ENCODE measurements at regions of chr2 and their contacts with region 1.

Region 1: DNA sequence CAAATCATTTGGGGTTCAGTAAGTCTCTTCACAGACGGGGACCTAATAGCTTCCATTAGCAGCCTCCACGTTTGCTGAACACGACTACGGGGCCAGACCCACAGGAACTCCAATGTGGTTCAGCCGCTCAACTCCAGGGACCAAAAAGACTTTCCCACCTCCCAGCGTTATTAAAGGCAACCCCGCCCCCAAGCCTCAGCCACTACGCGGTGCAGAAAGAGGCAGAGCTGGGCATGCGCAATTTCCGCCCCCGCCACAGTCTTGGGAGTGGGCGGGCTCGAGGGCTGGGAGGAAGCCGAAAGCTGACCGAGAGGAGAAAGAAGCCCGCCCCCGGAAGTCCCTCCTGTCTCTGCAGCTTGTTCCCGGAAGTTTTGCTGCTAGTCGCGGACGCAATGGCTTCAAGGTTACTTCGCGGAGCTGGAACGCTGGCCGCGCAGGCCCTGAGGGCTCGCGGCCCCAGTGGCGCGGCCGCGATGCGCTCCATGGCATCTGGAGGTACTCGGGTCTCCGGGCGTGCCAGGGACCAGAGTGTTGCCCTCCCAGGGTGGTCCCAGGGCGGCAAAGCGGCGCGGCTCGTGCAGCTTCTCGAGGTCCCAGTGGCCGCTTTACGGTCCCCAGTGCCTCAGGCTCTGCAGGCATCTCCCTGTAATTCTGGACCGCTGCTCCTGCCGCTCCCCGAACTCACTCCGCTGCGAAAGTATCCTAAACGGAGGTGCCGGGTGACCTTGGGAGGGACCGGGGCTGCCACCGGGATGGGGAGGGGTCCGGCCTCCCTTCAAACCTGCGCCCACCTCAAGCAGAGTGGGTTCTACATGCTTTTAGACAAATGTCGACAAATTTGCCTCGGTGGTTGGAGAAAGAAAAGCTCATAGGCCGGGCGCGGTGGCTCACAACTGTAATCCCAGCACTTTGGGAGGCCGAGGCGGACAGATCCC is at the start of gene COX5B:
- DNase-seq: peak; percentile 98
- ATAC-seq: peak; percentile 96
- H3K4me3 ChIP-seq: peak within 1 kb of the TSS; percentile 98 to 100 (median 99)
- H3K27ac ChIP-seq: peak within 1 kb of the TSS; percentile 76
- H3K4me1 ChIP-seq: peaks cover 21% of the 10 kb centered on the region
- H3K27me3 ChIP-seq: no peaks in the 10 kb centered on the region; a peak in 1 of 5 replicates
- CTCF ChIP-seq: peak; percentile 29; the same call in 1 of the 2 replicates
- EP300 ChIP-seq: no peak; a peak in 1 of 4 replicates
- POLR2A ChIP-seq: peak; percentile 92 to 95
- RAD21 ChIP-seq: no peak; the same call in 1 of the 2 replicates
- total RNA-seq, gene COX5B: 453 and 457 TPM in 2 replicates

Region 2: GRCh38 chr2:97663965-97664635 is 18.1 kb after region 1 on chr2 and contains the start of gene ACTR1B:
- CTCF ChIA-PET with region 1: no interaction called
- POLR2A ChIA-PET with region 1: interaction called, 298 read pairs
- in situ Hi-C with region 1: no loop called
- intact Hi-C with region 1: loop called (anchors 2 kb)
- DNase-seq: peak; percentile 98
- ATAC-seq: peak; percentile 91
- H3K4me3 ChIP-seq: peak within 1 kb of the TSS; percentile 80 to 96 (median 87)
- H3K27ac ChIP-seq: peak within 1 kb of the TSS; percentile 92
- H3K4me1 ChIP-seq: peaks cover 44% of the 10 kb centered on the region
- H3K27me3 ChIP-seq: no peaks in the 10 kb centered on the region; a peak in 1 of 5 replicates
- CTCF ChIP-seq: peak; percentile 52
- EP300 ChIP-seq: peak in 1 of 2 experiments; percentile 26; a peak in 1 of 4 replicates
- POLR2A ChIP-seq: peak; percentile 81 to 91
- RAD21 ChIP-seq: peak; percentile 54; the same call in 1 of the 2 replicates
- total RNA-seq, gene ACTR1B: 59.9 and 76.7 TPM in 2 replicates

Region 3: DNA sequence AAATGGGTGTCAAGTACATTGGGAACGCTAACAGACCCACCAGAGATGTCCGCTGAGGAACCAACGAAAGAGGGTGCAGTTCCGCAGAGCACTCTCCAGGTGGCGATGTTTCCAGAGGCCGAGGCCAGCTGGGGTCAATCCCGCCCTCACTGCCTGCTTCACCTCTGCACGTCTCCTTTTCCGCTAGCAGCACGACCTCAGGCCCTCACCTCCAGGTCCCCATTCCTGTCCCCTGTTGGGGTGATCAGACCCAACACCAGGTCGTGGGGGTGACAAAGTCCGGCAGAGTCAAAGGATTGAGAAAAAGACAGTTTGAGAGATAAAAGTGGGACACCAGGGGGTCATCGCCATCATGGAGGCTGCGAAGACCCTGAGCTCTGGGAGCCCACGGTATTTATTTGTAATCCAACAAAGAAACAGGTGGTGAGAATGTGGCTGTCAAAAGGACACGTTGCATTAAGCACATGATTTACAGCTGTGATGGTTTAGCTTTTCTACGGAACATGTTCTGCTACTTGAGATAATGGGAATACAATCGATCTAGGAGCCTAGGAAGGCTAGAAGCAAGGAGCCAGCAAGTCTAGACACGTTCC is 94.7 kb after region 1 on chr2:
- CTCF ChIA-PET with region 1: no interaction called
- POLR2A ChIA-PET with region 1: no interaction called
- in situ Hi-C with region 1: no loop called
- intact Hi-C with region 1: no loop called
- DNase-seq: peak; percentile 54
- ATAC-seq: peak; percentile 71
- H3K4me3 ChIP-seq: peak overlapping the region in 1 of 3 experiments; percentile 44; a peak in 1 of 6 replicates
- H3K27ac ChIP-seq: no peak overlapping the region
- H3K4me1 ChIP-seq: peaks cover 35% of the 10 kb centered on the region
- H3K27me3 ChIP-seq: peaks cover 2 to 27% of the 10 kb centered on the region in 2 experiments; a peak in 4 of 5 replicates
- CTCF ChIP-seq: peak; percentile 95
- EP300 ChIP-seq: no peak
- POLR2A ChIP-seq: no peak
- RAD21 ChIP-seq: peak; percentile 76

Region 4: DNA sequence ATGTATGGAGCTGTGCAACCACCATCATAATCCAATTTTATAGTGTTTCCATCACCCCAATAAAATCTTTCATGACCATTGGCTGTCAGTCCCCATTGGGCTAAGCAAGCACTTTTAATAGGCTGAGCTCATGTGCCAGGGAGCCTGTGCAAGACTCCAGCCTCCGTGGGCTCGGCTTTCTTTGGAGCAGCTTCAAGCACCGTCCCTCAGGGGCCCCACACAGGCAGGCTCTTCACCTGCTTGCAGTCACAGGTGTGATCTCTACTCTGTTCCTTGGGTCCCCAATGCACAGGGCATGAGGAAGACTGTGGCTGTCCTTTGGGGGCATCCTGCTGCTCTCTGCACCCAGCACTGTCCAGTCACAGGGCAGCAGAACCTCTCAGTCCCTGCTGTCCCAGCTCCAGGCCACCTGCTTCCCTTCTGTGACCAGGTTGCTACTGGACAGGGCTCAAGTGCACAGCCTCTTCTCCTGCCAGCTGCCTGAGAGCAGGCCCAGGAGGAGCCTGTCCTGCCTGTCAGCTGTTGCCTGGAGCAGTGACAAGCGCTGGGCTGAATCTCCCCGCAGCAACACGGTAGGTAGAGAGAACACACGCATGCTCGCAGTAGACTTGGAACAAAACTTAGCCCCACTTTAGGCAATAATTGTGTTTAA is 390.5 kb after region 1 on chr2:
- CTCF ChIA-PET with region 1: no interaction called
- POLR2A ChIA-PET with region 1: no interaction called
- in situ Hi-C with region 1: no loop called
- intact Hi-C with region 1: no loop called
- DNase-seq: no peak
- ATAC-seq: no peak; the same call in none of the 3 replicates
- H3K4me3 ChIP-seq: no peak overlapping the region
- H3K27ac ChIP-seq: no peak overlapping the region
- H3K4me1 ChIP-seq: no peaks in the 10 kb centered on the region; the same call in 1 of the 2 replicates
- H3K27me3 ChIP-seq: peaks cover 0 to 8% of the 10 kb centered on the region in 2 experiments; a peak in 3 of 5 replicates
- CTCF ChIP-seq: no peak
- EP300 ChIP-seq: no peak
- POLR2A ChIP-seq: no peak
- RAD21 ChIP-seq: no peak

Region 5: DNA sequence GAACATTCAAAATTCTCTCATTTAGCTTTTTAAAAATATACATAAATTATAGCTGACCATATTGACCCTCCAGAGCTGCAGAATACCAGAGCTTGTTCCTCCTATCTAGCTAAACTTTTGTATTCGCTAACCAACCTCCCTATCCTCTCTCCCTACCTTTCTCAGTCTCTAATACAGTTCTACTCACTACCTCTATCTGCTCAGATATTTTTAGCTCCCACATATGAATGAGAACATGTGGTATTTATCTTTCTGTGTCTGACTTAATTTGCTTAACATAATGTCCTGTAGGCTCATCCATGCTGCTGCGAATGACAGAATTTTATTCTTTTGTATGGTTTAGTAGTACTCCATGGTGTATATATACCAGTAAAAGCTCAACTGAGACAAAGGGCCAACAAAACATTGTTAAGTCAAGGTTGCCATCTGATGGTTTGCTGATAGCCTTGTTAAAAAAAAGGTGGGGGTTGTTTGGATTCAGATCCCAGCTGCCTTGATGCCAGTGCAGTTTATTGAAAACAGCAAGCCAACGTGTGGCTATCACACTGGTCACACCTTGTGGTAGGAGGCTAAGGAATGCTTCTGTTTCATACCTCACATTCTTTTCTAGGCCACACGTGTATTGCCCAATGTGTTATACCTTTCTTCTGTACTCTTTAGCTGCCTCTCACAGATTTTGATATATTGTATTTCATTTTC is 542.5 kb after region 1 on chr2:
- CTCF ChIA-PET with region 1: no interaction called
- POLR2A ChIA-PET with region 1: no interaction called
- in situ Hi-C with region 1: no loop called
- intact Hi-C with region 1: no loop called
- DNase-seq: peak; percentile 13
- ATAC-seq: no peak
- H3K4me3 ChIP-seq: no peak overlapping the region
- H3K27ac ChIP-seq: no peak overlapping the region
- H3K4me1 ChIP-seq: no peaks in the 10 kb centered on the region
- H3K27me3 ChIP-seq: peaks cover 3 to 32% of the 10 kb centered on the region in 2 experiments; a peak in 3 of 5 replicates
- CTCF ChIP-seq: peak; percentile 18; the same call in 1 of the 2 replicates
- EP300 ChIP-seq: no peak
- POLR2A ChIP-seq: no peak
- RAD21 ChIP-seq: no peak